ENCODE measurements at regions of chr22 and their contacts with region 1.

Region 1: GRCh38 chr22:38681784-38682335 is at the start of gene TOMM22:
- DNase-seq: peak; percentile 89
- ATAC-seq: peak; percentile 98
- H3K4me3 Mint-ChIP-seq: peak within 1 kb of the TSS; percentile 97
- H3K27ac Mint-ChIP-seq: peak within 1 kb of the TSS; percentile 96
- H3K4me1 Mint-ChIP-seq: peaks cover 26% of the 10 kb centered on the region
- H3K27me3 Mint-ChIP-seq: no peaks in the 10 kb centered on the region
- CTCF ChIP-seq: no peak
- total RNA-seq, gene TOMM22: 155 to 158 TPM

Region 2: DNA sequence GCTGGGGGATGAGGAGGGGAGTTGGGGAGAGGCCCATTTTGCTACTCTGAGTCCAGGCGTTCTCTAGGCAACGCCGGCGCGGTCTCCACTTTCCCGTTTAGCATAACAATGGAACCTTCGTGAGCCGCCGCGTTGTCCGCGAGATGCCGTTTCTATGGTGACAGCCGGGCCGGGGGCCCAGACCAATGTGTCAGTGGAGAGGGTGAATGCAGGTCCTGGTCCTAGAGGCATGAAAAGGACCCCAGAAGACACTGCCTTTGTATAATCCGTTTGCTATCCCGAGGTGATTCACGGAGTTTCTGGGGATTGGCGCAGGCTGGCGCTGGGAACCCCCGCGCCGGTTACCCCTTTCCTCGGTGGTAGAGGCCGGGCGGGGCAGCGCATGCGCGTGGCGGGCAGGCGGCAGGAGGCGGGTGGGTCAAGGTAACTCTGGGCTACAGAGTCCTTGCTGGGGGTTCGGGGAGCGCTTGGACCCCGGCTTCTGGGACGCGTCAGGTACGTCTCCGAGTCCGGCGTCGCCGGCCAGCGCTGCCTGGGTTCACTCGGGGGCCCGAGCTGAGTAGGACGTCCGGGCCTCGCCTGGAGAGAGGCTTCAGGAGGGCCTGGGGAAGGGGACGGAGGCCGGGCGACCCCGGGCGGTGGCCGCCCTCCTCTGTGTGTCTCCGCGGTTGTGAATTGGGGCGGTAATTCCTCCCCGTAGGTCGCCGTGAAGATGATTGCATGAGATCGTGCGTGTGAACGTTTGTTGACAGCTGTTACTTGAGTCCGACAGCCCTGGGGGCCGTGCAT is 25.4 kb before region 1 on chr22 and contains the starts of genes CBY1 and FAM227A:
- CTCF ChIA-PET with region 1: interaction called, 13 read pairs
- POLR2A ChIA-PET with region 1: interaction called, 12 read pairs
- intact Hi-C with region 1: no loop called
- DNase-seq: peak; percentile 89
- ATAC-seq: peak; percentile 83
- H3K4me3 Mint-ChIP-seq: peak within 1 kb of the TSS; percentile 94
- H3K27ac Mint-ChIP-seq: peak within 1 kb of the TSS; percentile 98
- H3K4me1 Mint-ChIP-seq: peaks cover 14% of the 10 kb centered on the region
- H3K27me3 Mint-ChIP-seq: no peaks in the 10 kb centered on the region
- CTCF ChIP-seq: no peak
- total RNA-seq, gene CBY1: 15.6 to 15.7 TPM
- total RNA-seq, gene FAM227A: 0.74 to 1.1 TPM

Region 3: DNA sequence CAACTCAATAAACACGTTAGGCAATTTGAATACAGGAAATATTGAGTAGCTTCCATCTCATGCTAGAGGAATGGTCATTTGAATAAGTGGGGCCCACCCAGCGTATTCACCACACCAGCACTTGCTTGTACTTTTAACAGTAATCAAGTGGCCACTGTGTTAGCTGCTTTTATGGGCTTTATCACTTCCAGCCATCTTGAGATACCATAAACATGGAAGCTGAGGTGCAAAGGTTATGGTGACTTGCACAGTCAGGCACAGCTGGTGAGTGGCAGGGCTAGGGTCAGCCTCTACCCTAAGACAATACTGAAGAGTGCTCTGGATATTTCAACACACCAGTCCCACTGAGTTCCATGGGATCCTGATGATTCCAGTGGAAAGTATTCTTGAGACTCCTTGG is 12.2 kb after region 1 on chr22:
- CTCF ChIA-PET with region 1: interaction called, 16 read pairs
- POLR2A ChIA-PET with region 1: interaction called, 62 read pairs
- intact Hi-C with region 1: no loop called
- DNase-seq: no peak
- ATAC-seq: no peak
- H3K4me3 Mint-ChIP-seq: no peak overlapping the region
- H3K27ac Mint-ChIP-seq: no peak overlapping the region
- H3K4me1 Mint-ChIP-seq: peaks cover 48% of the 10 kb centered on the region
- H3K27me3 Mint-ChIP-seq: no peaks in the 10 kb centered on the region
- CTCF ChIP-seq: no peak

Region 4: DNA sequence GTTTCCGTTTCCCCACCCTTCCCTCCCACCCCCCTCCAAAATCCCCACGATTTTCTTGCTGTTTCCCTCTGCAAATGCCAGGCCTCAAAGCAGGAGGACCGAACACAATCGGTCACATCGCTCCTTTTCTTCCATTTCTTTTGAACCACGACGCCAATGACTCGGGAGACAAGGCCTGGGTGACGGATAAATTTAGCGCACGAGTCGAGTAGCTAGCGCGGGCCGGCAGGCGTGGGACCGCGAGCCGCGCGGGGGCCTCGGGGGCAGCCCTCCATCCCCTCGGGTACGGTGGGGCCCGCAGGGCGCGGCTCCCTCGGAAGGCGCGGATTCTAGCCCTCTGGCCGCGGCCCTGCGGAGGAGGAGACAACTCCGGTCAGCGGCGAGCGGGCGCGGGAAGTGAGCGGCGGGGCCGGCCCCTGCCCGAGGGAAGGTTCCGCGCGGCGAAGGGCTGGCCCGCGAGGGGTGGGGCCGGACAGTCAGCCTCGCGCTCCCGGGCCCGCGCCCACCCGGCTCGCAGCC is 18.5 kb after region 1 on chr22:
- CTCF ChIA-PET with region 1: interaction called, 16 read pairs
- POLR2A ChIA-PET with region 1: interaction called, 62 read pairs
- intact Hi-C with region 1: no loop called
- DNase-seq: peak; percentile 45
- ATAC-seq: peak; percentile 1
- H3K4me3 Mint-ChIP-seq: peak overlapping the region; percentile 90
- H3K27ac Mint-ChIP-seq: peak overlapping the region; percentile 96
- H3K4me1 Mint-ChIP-seq: peaks cover 50% of the 10 kb centered on the region
- H3K27me3 Mint-ChIP-seq: no peaks in the 10 kb centered on the region
- CTCF ChIP-seq: no peak

Region 5: DNA sequence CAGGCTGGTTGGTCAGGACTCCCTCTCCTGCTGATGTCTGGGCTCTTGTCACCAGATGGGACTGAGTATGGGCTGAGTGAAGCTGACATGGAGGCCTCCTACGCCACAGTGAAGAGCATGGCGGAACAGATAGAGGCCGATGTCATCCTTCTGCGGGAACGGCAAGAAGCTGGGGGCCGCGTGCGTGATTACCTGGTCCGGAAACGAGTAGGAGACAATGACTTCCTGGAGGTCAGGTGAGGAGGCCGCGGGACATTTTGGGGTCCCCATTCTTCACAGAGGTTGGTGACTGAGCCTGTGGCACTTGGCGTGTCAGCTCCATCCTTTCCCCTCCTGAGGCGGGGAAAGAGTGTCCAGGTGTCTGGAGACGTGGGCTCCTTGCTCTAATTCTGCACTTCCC is 34.0 kb after region 1 on chr22:
- CTCF ChIA-PET with region 1: no interaction called
- POLR2A ChIA-PET with region 1: no interaction called
- intact Hi-C with region 1: no loop called
- DNase-seq: no peak
- ATAC-seq: no peak
- H3K4me3 Mint-ChIP-seq: no peak overlapping the region
- H3K27ac Mint-ChIP-seq: no peak overlapping the region
- H3K4me1 Mint-ChIP-seq: peaks cover 30% of the 10 kb centered on the region
- H3K27me3 Mint-ChIP-seq: no peaks in the 10 kb centered on the region
- CTCF ChIP-seq: no peak

Measured in activated CD8-positive, alpha-beta T cell treated with anti-CD3 and anti-CD28 coated beads for 36 hours (primary cell).